Aorta (tissue), 5 donors: ENCODE measurements at regions of chr10 and their contacts with region 1.

Region 1: DNA sequence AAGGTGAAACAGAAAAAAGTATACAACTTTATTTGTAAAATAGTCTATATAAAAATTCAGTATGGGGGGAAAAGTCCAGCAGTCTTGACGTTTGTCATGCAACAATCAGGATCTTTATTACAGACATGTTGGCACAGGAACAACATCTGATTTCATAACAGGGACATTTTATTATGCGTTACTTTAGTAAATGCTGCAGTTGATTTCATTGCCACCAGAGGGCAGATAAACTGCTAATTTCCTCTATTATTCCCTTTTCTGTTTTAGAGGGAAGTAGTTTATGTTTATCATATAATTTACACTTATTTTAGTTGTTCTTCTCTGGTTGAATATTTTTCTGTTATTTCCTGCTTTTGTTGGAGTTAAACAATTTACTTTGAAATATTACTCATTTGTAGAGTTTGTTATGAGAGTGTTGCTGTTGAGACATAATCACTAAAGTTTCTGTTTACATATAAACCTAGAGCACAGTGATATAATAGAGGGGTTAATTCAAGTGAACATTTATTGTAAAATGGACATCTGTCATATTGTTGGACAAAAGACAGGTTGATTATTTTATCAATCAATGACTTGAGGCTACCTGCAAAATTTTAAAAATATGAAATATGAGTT is 3.3 kb downstream of the PLXDC2 start:
- DNase-seq: no peak
- ATAC-seq: peak; percentile 42
- H3K4me3 ChIP-seq: no peak overlapping the region
- H3K27ac ChIP-seq: no peak overlapping the region
- H3K4me1 ChIP-seq: peaks cover 0 to 2% of the 10 kb centered on the region in 2 donors
- H3K27me3 ChIP-seq: no peaks in the 10 kb centered on the region

Region 2: DNA sequence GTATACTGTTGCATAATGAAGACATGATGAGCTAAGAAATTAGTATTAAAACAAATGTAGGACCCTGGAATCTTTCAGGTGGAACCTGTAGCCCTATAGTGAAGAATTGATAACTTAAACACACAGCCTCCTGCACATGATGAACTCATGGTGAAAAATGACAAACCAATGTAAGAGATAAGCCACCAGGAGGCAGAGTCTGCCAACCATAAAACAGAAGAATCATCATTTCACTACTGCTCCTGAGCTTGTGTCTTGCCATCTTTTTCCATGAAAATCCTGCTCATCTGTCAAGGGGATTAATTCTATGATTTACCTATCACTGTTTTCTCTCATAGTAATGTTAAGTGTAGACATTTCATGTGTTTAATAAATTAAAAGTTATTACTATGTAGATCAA is 407.0 kb before region 1 on chr10:
- intact Hi-C with region 1: loop called (anchors 5 to 10 kb)
- DNase-seq: no peak
- ATAC-seq: no peak
- H3K4me3 ChIP-seq: no peak overlapping the region
- H3K27ac ChIP-seq: no peak overlapping the region
- H3K4me1 ChIP-seq: no peaks in the 10 kb centered on the region
- H3K27me3 ChIP-seq: no peaks in the 10 kb centered on the region

Region 3: DNA sequence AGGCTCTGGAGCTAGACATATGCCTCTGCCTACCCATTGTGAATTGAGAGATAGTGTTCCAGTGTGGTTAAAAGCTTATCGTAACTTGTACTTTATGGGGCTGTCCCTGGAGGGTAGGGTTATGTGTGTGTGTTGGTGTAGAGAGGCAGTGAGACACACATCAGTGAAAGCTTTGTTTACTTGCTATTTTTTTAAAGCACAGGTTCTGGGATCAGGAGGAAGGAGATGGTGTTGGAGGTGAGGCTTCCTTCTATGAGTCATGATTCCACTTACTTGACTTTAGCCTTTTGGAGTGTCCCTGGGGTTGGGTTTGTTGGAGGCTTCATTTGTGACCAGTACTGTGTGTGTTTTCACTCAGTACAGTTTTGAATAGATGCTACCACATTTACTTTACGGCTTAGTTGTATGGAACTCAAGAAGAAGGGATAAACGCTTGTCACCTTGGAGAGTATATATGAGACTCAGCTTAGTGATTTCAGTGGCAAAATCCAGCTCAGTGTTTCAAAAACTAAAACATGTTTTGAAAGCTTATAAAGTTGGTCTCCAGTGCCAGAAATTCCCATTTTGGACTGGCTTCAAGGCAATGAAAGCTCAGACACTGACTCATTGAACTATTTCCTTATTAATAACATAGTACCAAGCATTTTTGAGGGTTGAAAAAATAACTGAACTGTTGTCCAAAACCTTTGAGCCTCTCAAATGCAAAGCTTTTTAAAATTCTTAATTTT is 102.9 kb after region 1 on chr10:
- intact Hi-C with region 1: loop called (anchors 5 kb)
- DNase-seq: no peak
- ATAC-seq: peak; percentile 79
- H3K4me3 ChIP-seq: no peak overlapping the region
- H3K27ac ChIP-seq: peak overlapping the region; percentile 78 to 86
- H3K4me1 ChIP-seq: peaks cover 3 to 20% of the 10 kb centered on the region in 2 donors
- H3K27me3 ChIP-seq: no peaks in the 10 kb centered on the region

Region 4: GRCh38 chr10:20415684-20416083 is 596.2 kb after region 1 on chr10:
- intact Hi-C with region 1: loop called in 1 of 2 experiments (anchors 10 kb)
- DNase-seq: no peak
- ATAC-seq: no peak
- H3K4me3 ChIP-seq: no peak overlapping the region
- H3K27ac ChIP-seq: no peak overlapping the region
- H3K4me1 ChIP-seq: peaks cover 0 to 2% of the 10 kb centered on the region in 2 donors
- H3K27me3 ChIP-seq: no peaks in the 10 kb centered on the region

Region 5: GRCh38 chr10:20582041-20582440 is 762.5 kb after region 1 on chr10:
- intact Hi-C with region 1: no loop called
- DNase-seq: no peak
- ATAC-seq: no peak
- H3K4me3 ChIP-seq: no peak overlapping the region
- H3K27ac ChIP-seq: no peak overlapping the region
- H3K4me1 ChIP-seq: no peaks in the 10 kb centered on the region
- H3K27me3 ChIP-seq: no peaks in the 10 kb centered on the region

Region 6: GRCh38 chr10:20858292-20859124 is 1039.0 kb after region 1 on chr10:
- intact Hi-C with region 1: loop called (anchors 10 kb)
- DNase-seq: no peak
- ATAC-seq: no peak
- H3K4me3 ChIP-seq: no peak overlapping the region
- H3K27ac ChIP-seq: no peak overlapping the region
- H3K4me1 ChIP-seq: no peaks in the 10 kb centered on the region
- H3K27me3 ChIP-seq: no peaks in the 10 kb centered on the region